Activated CD8-positive, alpha-beta T cell treated with anti-CD3 and anti-CD28 coated beads, Interleukin-2, amount 10 ng/mL, durations not matched to agents 7 days and 5 days (primary cell): ENCODE measurements at regions of chr1 and their contacts with region 1.

Region 1: DNA sequence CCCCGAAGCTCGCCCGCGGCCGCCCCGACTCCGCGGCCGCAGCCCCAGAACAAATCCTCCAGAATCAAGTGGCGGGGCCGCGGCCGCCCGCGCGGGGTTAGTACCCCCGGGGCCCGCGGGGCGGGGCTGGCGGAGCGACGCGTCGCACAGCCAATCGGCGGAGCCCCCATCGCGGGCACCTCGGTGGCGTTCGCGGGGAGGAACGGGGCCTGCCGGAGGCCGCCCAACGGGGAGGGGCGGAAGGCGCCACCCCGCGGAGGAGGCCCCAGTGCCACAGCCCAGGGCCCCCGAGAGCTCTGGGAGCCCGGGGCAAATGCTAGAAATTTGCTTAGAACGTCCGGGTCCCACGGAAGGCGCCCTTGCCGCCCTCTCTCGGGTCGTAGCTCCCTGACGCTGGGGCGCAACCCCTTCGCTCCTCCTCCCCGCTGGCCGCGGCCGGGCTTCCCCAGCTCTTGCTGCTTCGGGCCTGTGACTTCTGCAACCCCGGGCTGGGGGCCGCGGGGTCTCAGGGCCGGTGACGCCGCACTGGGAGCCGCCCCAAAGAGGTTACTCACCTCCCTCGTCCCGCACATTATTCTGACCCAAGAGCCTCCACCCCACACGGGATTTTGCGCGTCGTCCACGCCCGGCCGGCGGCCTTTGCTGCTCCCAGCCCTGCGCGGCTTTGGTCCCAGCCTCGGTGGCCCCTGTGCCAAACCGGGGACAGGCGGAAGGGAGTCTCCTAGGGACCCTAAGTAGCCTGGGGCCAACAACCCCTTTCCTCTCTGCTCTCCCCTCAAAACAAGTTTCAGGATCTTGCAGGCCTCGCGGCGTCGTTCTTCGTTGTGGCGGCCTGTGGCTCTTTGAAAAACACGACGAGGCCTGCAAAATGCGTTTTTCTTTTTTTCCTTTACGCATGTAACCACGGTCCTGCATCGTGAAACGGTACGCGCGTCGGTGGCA is at the start of gene RUNX3:
- DNase-seq: peak; percentile 92
- ATAC-seq: peak; percentile 79
- H3K4me3 Mint-ChIP-seq: peak within 1 kb of the TSS; percentile 95
- H3K27ac Mint-ChIP-seq: peak within 1 kb of the TSS; percentile 85
- H3K4me1 Mint-ChIP-seq: peaks cover 80% of the 10 kb centered on the region
- H3K27me3 Mint-ChIP-seq: no peaks in the 10 kb centered on the region
- total RNA-seq, gene RUNX3: 144 to 147 TPM

Region 2: GRCh38 chr1:24909388-24909898 is 21.0 kb before region 1 on chr1:
- CTCF ChIA-PET with region 1: interaction called, 14 read pairs
- POLR2A ChIA-PET with region 1: interaction called, 63 read pairs
- DNase-seq: no peak
- ATAC-seq: no peak
- H3K4me3 Mint-ChIP-seq: peak overlapping the region; percentile 12
- H3K27ac Mint-ChIP-seq: peak overlapping the region; percentile 95
- H3K4me1 Mint-ChIP-seq: peaks cover 52% of the 10 kb centered on the region
- H3K27me3 Mint-ChIP-seq: no peaks in the 10 kb centered on the region

Region 3: GRCh38 chr1:24941564-24941963 is 11.1 kb after region 1 on chr1:
- CTCF ChIA-PET with region 1: interaction called, 13 read pairs
- POLR2A ChIA-PET with region 1: interaction called, 6 read pairs
- DNase-seq: no peak
- ATAC-seq: peak; percentile 17
- H3K4me3 Mint-ChIP-seq: no peak overlapping the region
- H3K27ac Mint-ChIP-seq: peak overlapping the region; percentile 70
- H3K4me1 Mint-ChIP-seq: peaks cover 89% of the 10 kb centered on the region
- H3K27me3 Mint-ChIP-seq: no peaks in the 10 kb centered on the region

Region 4: GRCh38 chr1:24946861-24947658 is 16.6 kb after region 1 on chr1:
- CTCF ChIA-PET with region 1: interaction called, 13 read pairs
- POLR2A ChIA-PET with region 1: interaction called, 6 read pairs
- DNase-seq: no peak
- ATAC-seq: peak; percentile 40
- H3K4me3 Mint-ChIP-seq: peak overlapping the region; percentile 22
- H3K27ac Mint-ChIP-seq: peak overlapping the region; percentile 83
- H3K4me1 Mint-ChIP-seq: peaks cover 94% of the 10 kb centered on the region
- H3K27me3 Mint-ChIP-seq: no peaks in the 10 kb centered on the region

Region 5: DNA sequence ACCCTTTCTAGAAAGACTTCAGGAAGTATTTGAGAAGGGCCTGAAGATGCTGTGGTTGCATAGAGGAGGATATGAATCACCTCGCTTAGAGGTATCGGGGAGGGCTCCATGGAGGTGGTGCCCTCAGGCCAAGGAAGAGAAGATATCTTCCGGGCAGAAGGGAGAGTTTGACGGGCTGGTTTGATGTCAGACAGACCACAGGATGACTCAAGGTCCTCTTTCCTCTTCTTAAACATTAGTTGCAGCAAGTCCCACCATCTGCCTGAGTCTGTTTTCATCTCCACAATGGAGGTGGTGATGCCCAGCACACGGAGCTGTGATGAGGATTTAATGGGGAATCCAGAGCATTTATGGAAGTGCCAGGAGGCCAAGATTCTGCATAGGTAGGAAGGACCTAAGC is 24.7 kb after region 1 on chr1:
- CTCF ChIA-PET with region 1: interaction called, 28 read pairs
- POLR2A ChIA-PET with region 1: interaction called, 9 read pairs
- DNase-seq: peak; percentile 90
- ATAC-seq: peak; percentile 81
- H3K4me3 Mint-ChIP-seq: peak overlapping the region; percentile 73
- H3K27ac Mint-ChIP-seq: peak overlapping the region; percentile 94
- H3K4me1 Mint-ChIP-seq: peaks cover 95% of the 10 kb centered on the region
- H3K27me3 Mint-ChIP-seq: no peaks in the 10 kb centered on the region